CD4-positive, alpha-beta T cell (primary cell): ENCODE measurements at regions of chr19 and their contacts with region 1.

Region 1: DNA sequence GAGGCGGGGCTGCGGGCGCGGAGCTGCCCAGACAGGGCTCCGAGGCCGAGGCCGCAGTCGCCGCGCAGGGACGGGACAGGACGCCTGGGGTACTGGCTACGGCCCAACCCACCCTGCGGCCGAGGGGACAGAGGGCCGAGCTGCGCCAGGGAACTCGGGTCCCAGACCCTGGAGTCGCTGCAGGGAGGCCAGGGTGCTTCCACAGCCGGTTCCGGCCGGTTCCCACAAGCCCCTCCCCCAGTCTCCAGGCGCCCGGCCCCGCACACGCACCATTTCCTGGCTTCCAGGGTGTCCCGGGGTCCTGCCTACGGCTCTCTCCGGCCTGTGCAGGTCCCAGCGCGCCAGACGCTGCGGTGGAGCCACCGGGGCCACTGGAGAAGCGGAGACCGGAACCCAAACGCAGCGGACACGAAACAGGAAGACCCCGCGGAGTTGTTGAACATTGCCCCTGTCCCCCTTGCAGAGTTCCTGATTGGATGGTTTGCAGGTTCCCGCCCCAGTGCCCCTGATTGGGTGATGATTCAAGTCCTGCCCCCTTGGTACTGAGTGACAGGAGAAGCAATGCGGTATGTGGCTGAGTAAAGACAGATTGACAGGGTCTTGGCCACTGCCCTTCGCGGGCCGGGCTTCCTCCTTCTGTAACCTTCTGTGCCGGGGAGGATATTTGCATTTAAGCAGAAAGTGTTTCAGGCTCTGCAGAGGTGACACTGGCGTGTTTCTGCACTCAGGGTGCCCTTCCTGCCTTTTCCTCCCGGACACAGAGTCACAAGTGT is at the start of gene ZNF564:
- DNase-seq: peak; percentile 80 to 98 (median 86)
- ATAC-seq: peak; percentile 97
- H3K4me3 ChIP-seq: peak within 1 kb of the TSS; percentile 98
- H3K4me3 Mint-ChIP-seq: peak within 1 kb of the TSS; percentile 89
- H3K27ac ChIP-seq: peak within 1 kb of the TSS; percentile 77 to 87
- H3K27ac Mint-ChIP-seq: peak within 1 kb of the TSS; percentile 85
- H3K4me1 ChIP-seq: peaks cover 43% of the 10 kb centered on the region
- H3K4me1 Mint-ChIP-seq: peaks cover 46% of the 10 kb centered on the region
- H3K27me3 ChIP-seq: no peaks in the 10 kb centered on the region
- H3K27me3 Mint-ChIP-seq: no peaks in the 10 kb centered on the region
- CTCF ChIP-seq: no peak
- total RNA-seq, gene ZNF564: 17.3 to 18.0 TPM

Region 2: GRCh38 chr19:12400633-12401502 is 150.4 kb before region 1 on chr19 and contains the start of gene ZNF799:
- CTCF ChIA-PET with region 1: no interaction called
- POLR2A ChIA-PET with region 1: no interaction called
- intact Hi-C with region 1: no loop called
- DNase-seq: peak; percentile 54 to 90 (median 75)
- ATAC-seq: peak; percentile 92
- H3K4me3 ChIP-seq: peak within 1 kb of the TSS; percentile 95
- H3K4me3 Mint-ChIP-seq: peak within 1 kb of the TSS; percentile 93
- H3K27ac ChIP-seq: no peak within 1 kb of the TSS
- H3K27ac Mint-ChIP-seq: peak within 1 kb of the TSS; percentile 81
- H3K4me1 ChIP-seq: peaks cover 9% of the 10 kb centered on the region
- H3K4me1 Mint-ChIP-seq: peaks cover 27% of the 10 kb centered on the region
- H3K27me3 ChIP-seq: no peaks in the 10 kb centered on the region
- H3K27me3 Mint-ChIP-seq: no peaks in the 10 kb centered on the region
- CTCF ChIP-seq: no peak
- total RNA-seq, gene ZNF799: 1.1 to 1.6 TPM

Region 3: GRCh38 chr19:12484371-12485051 is 66.7 kb before region 1 on chr19 and contains the start of gene ZNF709:
- CTCF ChIA-PET with region 1: no interaction called
- POLR2A ChIA-PET with region 1: no interaction called
- intact Hi-C with region 1: loop called in 1 of 2 experiments (anchors 5 kb)
- DNase-seq: peak; percentile 73 to 93 (median 86)
- ATAC-seq: peak; percentile 98
- H3K4me3 ChIP-seq: peak within 1 kb of the TSS; percentile 99
- H3K4me3 Mint-ChIP-seq: peak within 1 kb of the TSS; percentile 98
- H3K27ac ChIP-seq: peak within 1 kb of the TSS; percentile 52 to 68
- H3K27ac Mint-ChIP-seq: peak within 1 kb of the TSS; percentile 97
- H3K4me1 ChIP-seq: peaks cover 37% of the 10 kb centered on the region
- H3K4me1 Mint-ChIP-seq: peaks cover 36% of the 10 kb centered on the region
- H3K27me3 ChIP-seq: no peaks in the 10 kb centered on the region
- H3K27me3 Mint-ChIP-seq: no peaks in the 10 kb centered on the region
- CTCF ChIP-seq: no peak
- total RNA-seq, gene ZNF709: 3.5 to 3.7 TPM

Region 4: GRCh38 chr19:12513531-12514061 is 37.6 kb before region 1 on chr19:
- CTCF ChIA-PET with region 1: no interaction called
- POLR2A ChIA-PET with region 1: no interaction called
- intact Hi-C with region 1: no loop called
- DNase-seq: no peak
- ATAC-seq: no peak
- H3K4me3 ChIP-seq: no peak overlapping the region
- H3K4me3 Mint-ChIP-seq: no peak overlapping the region
- H3K27ac ChIP-seq: no peak overlapping the region
- H3K27ac Mint-ChIP-seq: no peak overlapping the region
- H3K4me1 ChIP-seq: no peaks in the 10 kb centered on the region
- H3K4me1 Mint-ChIP-seq: no peaks in the 10 kb centered on the region
- H3K27me3 ChIP-seq: peaks cover 0 to 6% of the 10 kb centered on the region in 2 experiments
- H3K27me3 Mint-ChIP-seq: peaks cover 4% of the 10 kb centered on the region
- CTCF ChIP-seq: no peak